Endothelial cell of umbilical vein (primary cell): ENCODE measurements at regions of chr14 and their contacts with region 1.

Region 1: GRCh38 chr14:50860478-50861086 is 11.3 kb upstream of the ABHD12B start:
- DNase-seq: peak; percentile 92
- H3K4me3 ChIP-seq: peak overlapping the region; percentile 49 to 72 (median 65)
- H3K27ac ChIP-seq: peak overlapping the region; percentile 78
- H3K4me1 ChIP-seq: peaks cover 10% of the 10 kb centered on the region
- H3K27me3 ChIP-seq: peaks cover 0 to 2% of the 10 kb centered on the region in 2 experiments
- CTCF ChIP-seq: peak; percentile 54 to 57
- POLR2A ChIP-seq: no peak

Region 2: DNA sequence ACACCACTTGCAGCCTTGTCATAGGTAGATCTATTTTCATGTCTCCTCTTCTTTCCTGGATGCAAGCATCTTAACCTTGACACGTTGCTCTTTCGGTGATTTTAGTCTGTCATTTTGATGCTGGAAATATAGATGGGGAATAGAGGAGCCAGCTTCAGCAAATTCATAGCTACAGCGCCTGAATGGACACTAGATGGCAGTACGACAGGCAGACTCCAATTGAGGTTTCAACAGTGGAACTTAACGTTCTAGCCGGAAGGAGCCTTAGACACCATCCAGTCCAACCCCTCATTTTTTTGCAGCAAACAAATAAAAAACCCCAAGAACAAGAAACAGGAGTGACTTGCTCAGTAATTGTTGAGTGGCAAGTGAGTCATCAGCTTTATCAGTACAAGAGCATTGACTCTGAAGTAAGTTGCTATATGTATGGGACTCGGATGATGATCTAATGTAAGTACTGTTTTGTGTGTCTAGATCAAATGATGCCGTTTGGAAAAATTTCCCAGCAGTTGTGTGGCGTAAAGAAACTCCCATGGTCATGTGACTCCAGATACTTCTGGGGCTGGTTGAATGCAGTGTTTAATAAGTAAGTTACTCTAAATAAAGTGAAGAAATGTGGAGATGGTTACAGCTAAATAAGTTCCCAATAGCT is 539.4 kb before region 1 on chr14:
- CTCF ChIA-PET with region 1: interaction called, 10 read pairs
- POLR2A ChIA-PET with region 1: no interaction called
- dilution Hi-C with region 1: no loop called
- intact Hi-C with region 1: no loop called
- DNase-seq: peak; percentile 96
- H3K4me3 ChIP-seq: peak overlapping the region in 2 of 3 experiments; percentile 11 to 53
- H3K27ac ChIP-seq: peak overlapping the region; percentile 88
- H3K4me1 ChIP-seq: peaks cover 8% of the 10 kb centered on the region
- H3K27me3 ChIP-seq: no peaks in the 10 kb centered on the region
- CTCF ChIP-seq: peak; percentile 86 to 87
- POLR2A ChIP-seq: no peak

Region 3: DNA sequence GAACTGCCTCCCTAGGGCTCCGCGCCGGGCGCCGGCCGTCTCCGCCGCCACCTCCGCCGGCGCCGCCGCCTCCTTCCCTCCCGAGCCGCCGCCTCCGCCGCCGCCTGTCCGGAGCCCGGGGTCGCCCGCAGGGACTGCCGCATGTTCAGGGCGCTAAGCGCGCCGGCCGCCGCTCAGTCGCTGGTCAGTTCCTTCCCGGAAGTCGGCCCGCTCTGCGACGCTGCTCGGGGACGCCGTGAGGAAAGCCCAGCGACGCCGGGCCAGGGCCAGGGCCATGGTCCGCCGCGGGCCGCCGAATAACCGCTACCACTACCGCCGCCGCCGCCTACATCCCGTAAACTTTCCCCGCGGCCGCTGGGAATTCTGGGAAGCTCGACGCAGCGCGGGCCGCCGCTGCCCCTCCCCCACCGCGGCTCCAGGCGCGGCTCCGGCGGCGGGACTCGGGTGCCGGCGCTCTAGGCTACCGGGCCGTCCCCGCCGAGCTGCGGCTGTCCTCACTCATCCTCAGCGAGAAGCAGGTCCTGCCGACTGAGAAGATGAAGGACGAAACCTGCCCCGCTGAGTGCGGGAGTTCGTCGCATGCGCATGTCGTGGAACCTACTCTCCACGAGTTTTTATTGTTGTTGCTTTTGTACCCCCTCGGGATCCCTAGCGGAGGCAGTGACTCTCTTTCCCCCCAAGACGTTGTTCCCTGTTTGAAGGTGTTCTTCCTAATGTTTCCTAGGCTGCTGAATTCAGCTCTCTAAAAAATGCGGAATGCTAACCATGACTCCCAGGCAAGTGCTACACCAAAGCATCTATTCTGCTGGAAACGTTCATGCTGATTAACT is 192.4 kb before region 1 on chr14 and contains the start of gene SAV1:
- CTCF ChIA-PET with region 1: no interaction called
- POLR2A ChIA-PET with region 1: interaction called, 3 read pairs
- dilution Hi-C with region 1: no loop called
- intact Hi-C with region 1: loop called (anchors 1 kb)
- DNase-seq: peak; percentile 82
- H3K4me3 ChIP-seq: peak within 1 kb of the TSS; percentile 70 to 85 (median 81)
- H3K27ac ChIP-seq: peak within 1 kb of the TSS; percentile 81
- H3K4me1 ChIP-seq: peaks cover 23% of the 10 kb centered on the region
- H3K27me3 ChIP-seq: no peaks in the 10 kb centered on the region
- CTCF ChIP-seq: no peak
- POLR2A ChIP-seq: peak; percentile 99
- total RNA-seq, gene SAV1: 27.8 and 31.0 TPM in 2 replicates

Region 4: GRCh38 chr14:50756300-50756699 is 104.3 kb before region 1 on chr14:
- CTCF ChIA-PET with region 1: interaction called, 18 read pairs
- POLR2A ChIA-PET with region 1: no interaction called
- dilution Hi-C with region 1: no loop called
- intact Hi-C with region 1: no loop called
- DNase-seq: no peak
- H3K4me3 ChIP-seq: no peak overlapping the region
- H3K27ac ChIP-seq: no peak overlapping the region
- H3K4me1 ChIP-seq: no peaks in the 10 kb centered on the region
- H3K27me3 ChIP-seq: no peaks in the 10 kb centered on the region
- CTCF ChIP-seq: no peak
- POLR2A ChIP-seq: no peak

Region 5: GRCh38 chr14:50798048-50798421 is 62.5 kb before region 1 on chr14:
- CTCF ChIA-PET with region 1: interaction called, 25 read pairs
- POLR2A ChIA-PET with region 1: no interaction called
- dilution Hi-C with region 1: no loop called
- intact Hi-C with region 1: loop called (anchors 1 kb)
- DNase-seq: no peak
- H3K4me3 ChIP-seq: no peak overlapping the region
- H3K27ac ChIP-seq: no peak overlapping the region
- H3K4me1 ChIP-seq: peaks cover 50% of the 10 kb centered on the region
- H3K27me3 ChIP-seq: no peaks in the 10 kb centered on the region
- CTCF ChIP-seq: no peak
- POLR2A ChIP-seq: no peak

Region 6: DNA sequence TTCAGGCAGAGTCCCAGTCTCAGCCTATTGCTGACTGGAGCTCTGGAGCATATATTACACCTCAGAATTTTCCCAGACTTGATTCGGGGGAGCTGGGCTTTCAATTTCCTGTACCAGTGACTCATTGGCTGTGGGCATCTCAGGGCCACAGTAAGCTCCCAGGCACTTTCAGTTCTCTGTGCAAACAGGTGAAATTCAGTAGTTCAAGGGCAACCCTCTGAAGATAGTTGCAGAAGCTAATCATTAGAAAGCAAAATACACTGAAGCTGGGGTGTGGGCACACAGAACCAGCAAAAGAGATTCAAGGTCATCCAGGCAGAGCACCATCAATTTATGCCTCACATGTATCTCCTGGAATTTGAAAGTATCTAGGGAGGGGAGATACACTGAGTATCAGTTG is 21.5 kb before region 1 on chr14:
- CTCF ChIA-PET with region 1: interaction called, 11 read pairs
- POLR2A ChIA-PET with region 1: no interaction called
- dilution Hi-C with region 1: no loop called
- intact Hi-C with region 1: no loop called
- DNase-seq: no peak
- H3K4me3 ChIP-seq: no peak overlapping the region
- H3K27ac ChIP-seq: no peak overlapping the region
- H3K4me1 ChIP-seq: no peaks in the 10 kb centered on the region
- H3K27me3 ChIP-seq: peaks cover 4 to 10% of the 10 kb centered on the region in 2 experiments
- CTCF ChIP-seq: no peak
- POLR2A ChIP-seq: no peak

Region 7: DNA sequence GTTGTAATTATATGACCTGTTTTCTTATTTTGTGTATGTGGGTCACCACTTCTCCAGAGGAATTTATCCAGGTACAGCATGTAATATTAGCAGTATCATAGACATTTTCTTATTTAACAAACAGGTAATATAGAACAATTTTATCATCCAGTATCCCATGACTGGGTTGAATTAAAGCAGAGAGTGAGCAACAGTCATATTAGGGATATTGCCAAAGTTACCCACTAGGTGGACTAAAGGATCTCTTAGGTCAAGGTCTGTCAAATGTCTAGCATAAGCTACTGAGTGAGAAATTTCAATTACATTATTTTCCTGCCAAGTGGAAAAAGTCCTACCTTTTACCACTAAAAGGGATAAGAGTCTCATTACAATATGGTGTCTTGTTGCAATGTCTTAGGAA is 296.4 kb after region 1 on chr14:
- CTCF ChIA-PET with region 1: no interaction called
- POLR2A ChIA-PET with region 1: no interaction called
- dilution Hi-C with region 1: no loop called
- intact Hi-C with region 1: no loop called
- DNase-seq: peak; percentile 13
- H3K4me3 ChIP-seq: no peak overlapping the region
- H3K27ac ChIP-seq: no peak overlapping the region
- H3K4me1 ChIP-seq: no peaks in the 10 kb centered on the region
- H3K27me3 ChIP-seq: peaks cover 0 to 2% of the 10 kb centered on the region in 2 experiments
- CTCF ChIP-seq: peak in 1 of 2 donors; percentile 9
- POLR2A ChIP-seq: no peak